Activated T-helper 1 cell treated with anti-CD3 and anti-CD28 coated beads, Interleukin-12 subunit alpha, Interleukin-12 subunit beta, Interleukin-2, Interleukin-4 antibody, amounts not matched to agents 30 ng/mL and 10 ng/mL and 1 ng/mL, durations not matched to agents 14 hours and 24 hours and 36 hours (primary cell): ENCODE measurements at regions of chr7 and their contacts with region 1.

Region 1: GRCh38 chr7:66920769-66921395 is at the start of gene TMEM248:
- DNase-seq: peak; percentile 90
- H3K4me3 Mint-ChIP-seq: peak within 1 kb of the TSS; percentile 98
- H3K27ac Mint-ChIP-seq: peak within 1 kb of the TSS; percentile 98
- H3K4me1 Mint-ChIP-seq: peaks cover 21% of the 10 kb centered on the region
- H3K27me3 Mint-ChIP-seq: no peaks in the 10 kb centered on the region
- total RNA-seq, gene TMEM248: 83.6 and 95.6 TPM in 2 replicates

Region 2: GRCh38 chr7:66591799-66592596 is 328.9 kb before region 1 on chr7:
- intact Hi-C with region 1: loop called (anchors 2 kb)
- DNase-seq: peak; percentile 87
- H3K4me3 Mint-ChIP-seq: peak overlapping the region; percentile 96
- H3K27ac Mint-ChIP-seq: peak overlapping the region; percentile 93
- H3K4me1 Mint-ChIP-seq: peaks cover 46% of the 10 kb centered on the region
- H3K27me3 Mint-ChIP-seq: peaks cover 3% of the 10 kb centered on the region

Region 3: DNA sequence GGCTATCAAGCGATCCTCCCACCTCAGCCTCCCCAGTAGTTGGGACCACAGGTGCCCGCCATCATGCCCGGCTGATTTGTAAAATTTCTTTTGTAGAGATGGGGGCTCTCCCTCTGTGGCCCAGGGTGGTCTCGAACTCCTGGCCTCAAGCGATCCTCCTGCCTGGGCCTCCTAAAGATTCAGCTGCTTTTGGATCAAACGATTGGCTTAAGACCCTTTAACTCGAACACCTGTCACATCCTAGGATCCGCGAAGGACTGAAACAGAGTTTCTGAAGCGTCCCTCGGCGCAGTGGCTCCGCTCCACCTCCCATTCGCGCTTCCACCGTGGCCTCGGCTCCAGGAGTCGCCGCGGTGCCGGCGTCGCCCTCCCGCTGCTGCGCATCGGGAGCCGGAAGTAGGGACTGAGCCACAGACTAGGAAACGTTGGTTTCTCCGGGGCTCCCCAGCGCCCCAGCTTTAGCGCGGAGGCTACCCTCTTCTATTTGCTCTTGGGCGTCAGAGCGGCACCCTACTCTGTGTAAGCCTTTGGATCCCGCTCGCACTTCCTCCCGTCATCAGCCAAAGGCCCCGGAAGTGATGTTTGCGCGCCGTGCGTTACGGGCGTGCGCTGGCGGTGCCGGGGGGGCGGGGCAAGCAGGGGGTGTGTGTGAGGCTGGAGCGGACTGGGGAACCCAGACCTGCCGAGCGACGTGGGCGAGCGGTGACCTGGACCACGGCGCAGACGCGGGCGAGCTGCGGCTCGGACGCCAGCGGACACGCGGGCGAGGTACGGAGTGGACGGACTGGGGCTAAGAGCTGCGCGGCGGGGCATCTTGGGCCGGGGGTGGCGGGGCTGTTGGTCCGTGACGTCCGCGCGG is 239.2 kb before region 1 on chr7:
- intact Hi-C with region 1: loop called (anchors 5 kb)
- DNase-seq: peak; percentile 93
- H3K4me3 Mint-ChIP-seq: peak overlapping the region; percentile 93
- H3K27ac Mint-ChIP-seq: peak overlapping the region; percentile 96
- H3K4me1 Mint-ChIP-seq: peaks cover 21% of the 10 kb centered on the region
- H3K27me3 Mint-ChIP-seq: no peaks in the 10 kb centered on the region

Region 4: GRCh38 chr7:66859794-66860645 is 60.9 kb before region 1 on chr7:
- intact Hi-C with region 1: loop called (anchors 2 kb)
- DNase-seq: peak; percentile 14
- H3K4me3 Mint-ChIP-seq: peak overlapping the region; percentile 72
- H3K27ac Mint-ChIP-seq: peak overlapping the region; percentile 99
- H3K4me1 Mint-ChIP-seq: peaks cover 21% of the 10 kb centered on the region
- H3K27me3 Mint-ChIP-seq: no peaks in the 10 kb centered on the region

Region 5: GRCh38 chr7:66905689-66906088 is 15.2 kb before region 1 on chr7:
- intact Hi-C with region 1: no loop called
- DNase-seq: no peak
- H3K4me3 Mint-ChIP-seq: no peak overlapping the region
- H3K27ac Mint-ChIP-seq: no peak overlapping the region
- H3K4me1 Mint-ChIP-seq: no peaks in the 10 kb centered on the region
- H3K27me3 Mint-ChIP-seq: no peaks in the 10 kb centered on the region

Region 6: DNA sequence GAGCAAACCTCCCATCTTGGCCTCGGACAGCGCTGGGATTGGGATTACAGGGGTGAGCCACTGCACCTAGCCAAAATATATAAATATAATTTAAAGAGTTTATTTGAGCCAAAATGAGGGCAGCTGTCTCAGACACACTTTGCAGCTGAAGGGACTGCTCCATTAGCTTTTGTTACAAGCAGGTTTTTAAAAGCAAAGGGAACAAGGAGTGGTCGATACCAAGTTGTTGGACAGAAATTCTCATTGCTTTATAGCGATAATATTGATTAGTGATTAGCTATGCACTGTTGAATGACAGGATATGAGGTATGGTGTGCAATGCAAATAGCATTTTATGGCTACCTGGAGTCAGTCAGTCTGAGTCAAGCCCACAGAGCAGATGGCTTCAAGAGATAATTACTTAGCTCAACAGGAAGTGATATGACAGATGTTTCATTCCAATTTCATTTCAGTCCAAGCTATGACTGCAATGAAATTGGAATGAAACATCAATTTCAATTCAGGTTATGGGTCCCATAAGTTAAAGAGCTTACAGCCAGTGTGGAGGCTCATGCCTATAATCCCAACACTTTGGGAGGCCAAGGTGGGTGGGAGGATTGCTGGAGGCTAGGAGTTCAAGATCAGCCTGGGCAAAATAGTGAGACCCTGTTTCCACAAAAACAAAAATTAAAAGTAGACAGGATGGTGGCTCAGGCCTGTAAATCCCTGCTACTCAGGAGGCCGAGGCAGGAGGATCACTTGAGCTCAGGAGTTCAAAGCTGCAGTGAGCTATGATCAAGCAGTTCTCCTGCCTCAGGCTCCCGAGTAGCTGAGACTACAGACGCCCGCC is 98.9 kb after region 1 on chr7:
- intact Hi-C with region 1: no loop called
- DNase-seq: no peak
- H3K4me3 Mint-ChIP-seq: no peak overlapping the region
- H3K27ac Mint-ChIP-seq: no peak overlapping the region
- H3K4me1 Mint-ChIP-seq: no peaks in the 10 kb centered on the region
- H3K27me3 Mint-ChIP-seq: no peaks in the 10 kb centered on the region